Colonic mucosa (tissue), 4 donors: ENCODE measurements at regions of chr9 and their contacts with region 1.

Region 1: DNA sequence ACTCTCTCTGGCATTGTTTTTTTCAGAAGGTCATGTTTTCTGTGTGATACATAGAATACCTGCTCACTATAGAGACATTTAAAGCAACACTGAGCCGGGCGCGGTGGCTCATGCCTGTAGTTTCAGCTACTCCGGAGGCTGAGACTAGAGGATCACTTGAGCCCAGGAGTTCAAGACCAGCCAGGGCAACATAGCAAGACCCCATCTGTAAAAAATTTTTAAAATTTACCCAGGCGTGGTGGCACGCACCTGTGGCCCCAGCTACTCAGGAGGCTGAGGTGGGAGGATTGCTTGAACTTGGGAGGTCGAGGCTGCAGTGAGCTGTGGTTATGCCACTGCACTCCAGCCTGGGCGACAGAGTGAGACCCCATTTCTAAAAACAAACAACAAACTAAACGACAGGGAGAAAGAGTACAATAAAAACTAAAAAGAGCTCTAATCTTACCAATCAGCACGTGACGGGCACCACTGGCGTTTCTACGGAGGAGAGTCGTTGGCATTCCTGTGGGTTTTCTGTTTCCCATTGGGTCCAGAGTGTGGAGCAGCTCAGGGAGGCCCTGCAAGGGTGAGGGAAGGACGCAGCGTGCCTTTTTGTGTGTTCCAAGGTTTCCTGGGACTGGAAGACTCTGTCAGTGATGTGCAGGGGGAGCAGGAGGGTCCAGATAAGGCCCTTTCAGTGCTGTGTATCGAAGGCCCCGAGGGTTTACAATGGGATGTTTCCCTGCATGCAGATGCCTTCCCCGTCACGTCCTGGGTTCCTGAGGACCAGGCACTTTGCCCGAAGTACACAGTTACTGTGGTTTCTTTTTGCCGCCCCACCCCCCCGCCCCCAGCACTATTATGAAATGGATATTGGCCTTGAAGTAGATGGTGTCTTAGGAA is 7.2 kb upstream of the RNU6ATAC start:
- DNase-seq: no peak
- H3K4me3 ChIP-seq: no peak overlapping the region
- H3K27ac ChIP-seq: no peak overlapping the region
- H3K4me1 ChIP-seq: no peaks in the 10 kb centered on the region
- H3K27me3 ChIP-seq: peaks cover 3% of the 10 kb centered on the region
- CTCF ChIP-seq: no peak

Region 2: DNA sequence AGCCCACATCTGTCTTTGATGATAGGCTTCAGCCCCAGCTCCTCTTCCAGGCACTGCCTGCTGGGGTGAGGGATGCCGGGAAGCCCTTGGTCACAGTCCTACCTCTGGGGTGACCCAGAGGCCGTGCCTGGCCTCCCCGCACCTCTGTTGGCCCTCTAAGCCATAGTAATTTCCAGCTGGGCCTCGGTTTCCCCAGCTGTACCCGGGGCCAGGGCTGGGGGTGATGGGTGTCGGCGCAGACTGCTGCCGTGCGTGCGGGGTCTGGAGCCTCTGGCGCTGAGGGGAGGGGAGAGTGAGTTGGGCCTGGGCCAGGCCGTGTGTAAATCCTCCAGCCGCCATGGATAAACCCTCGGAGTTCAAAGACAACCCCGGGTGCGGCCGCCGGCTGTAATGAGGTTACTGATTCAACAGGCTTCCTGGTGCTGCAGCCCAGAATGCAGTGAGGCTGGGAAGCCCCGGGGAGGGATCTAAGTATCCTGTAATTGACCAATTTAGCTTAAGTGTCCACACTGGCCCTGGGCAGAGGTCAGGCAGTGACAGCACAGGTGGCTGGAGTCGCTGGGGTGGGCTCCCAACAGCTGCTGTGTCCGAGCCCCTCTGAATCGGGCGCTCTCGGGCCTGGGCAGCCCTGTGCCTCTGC is 161.8 kb after region 1 on chr9:
- intact Hi-C with region 1: loop called (anchors 5 kb)
- DNase-seq: peak; percentile 89
- H3K4me3 ChIP-seq: no peak overlapping the region
- H3K27ac ChIP-seq: peak overlapping the region; percentile 75
- H3K4me1 ChIP-seq: peaks cover 60% of the 10 kb centered on the region
- H3K27me3 ChIP-seq: no peaks in the 10 kb centered on the region
- CTCF ChIP-seq: no peak

Region 3: DNA sequence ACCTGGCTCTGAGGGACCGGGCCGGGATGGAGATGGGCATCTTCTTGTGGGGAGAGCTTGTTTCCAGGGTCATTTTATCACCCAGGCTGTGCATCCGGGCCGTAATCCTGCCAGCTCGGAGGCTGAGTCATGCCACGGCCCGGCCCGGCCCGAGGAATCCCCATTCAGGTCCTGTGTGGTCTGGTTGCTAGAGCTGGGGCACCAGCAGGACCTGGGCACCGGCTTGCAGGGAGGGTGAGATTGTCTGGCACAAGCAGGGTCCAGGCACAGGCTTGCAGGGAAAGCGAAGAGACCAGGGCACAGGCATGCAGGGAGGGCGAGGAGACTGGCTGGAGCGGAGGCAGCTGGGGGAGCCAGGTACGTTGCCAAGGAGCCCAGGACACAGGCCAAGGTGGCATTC is 261.5 kb after region 1 on chr9:
- intact Hi-C with region 1: no loop called
- DNase-seq: no peak
- H3K4me3 ChIP-seq: no peak overlapping the region
- H3K27ac ChIP-seq: no peak overlapping the region
- H3K4me1 ChIP-seq: peaks cover 12% of the 10 kb centered on the region
- H3K27me3 ChIP-seq: no peaks in the 10 kb centered on the region
- CTCF ChIP-seq: no peak

Region 4: GRCh38 chr9:134443168-134444037 is 271.8 kb after region 1 on chr9:
- intact Hi-C with region 1: loop called (anchors 1 kb)
- DNase-seq: peak; percentile 88
- H3K4me3 ChIP-seq: no peak overlapping the region
- H3K27ac ChIP-seq: no peak overlapping the region
- H3K4me1 ChIP-seq: no peaks in the 10 kb centered on the region
- H3K27me3 ChIP-seq: no peaks in the 10 kb centered on the region
- CTCF ChIP-seq: peak; percentile 98